Left lung (tissue), 14 donors: ENCODE measurements at regions of chr16 and their contacts with region 1.

Region 1: GRCh38 chr16:8660841-8661301 is 13.5 kb upstream of the ABAT start:
- DNase-seq: peak in 3 of 4 donors; percentile 26 to 77 (median 49)
- ATAC-seq: peak; percentile 98
- H3K4me3 ChIP-seq: no peak overlapping the region
- H3K27ac ChIP-seq: no peak overlapping the region
- H3K4me1 ChIP-seq: no peaks in the 10 kb centered on the region
- H3K27me3 ChIP-seq: no peaks in the 10 kb centered on the region
- CTCF ChIP-seq: peak; percentile 48 to 56

Region 2: GRCh38 chr16:8797364-8798173 is 136.7 kb after region 1 on chr16 and contains the starts of genes PMM2 and TMEM186:
- intact Hi-C with region 1: loop called in 1 of 2 experiments (anchors 10 kb)
- DNase-seq: peak; percentile 90 to 99 (median 98)
- ATAC-seq: peak; percentile 99
- H3K4me3 ChIP-seq: peak within 1 kb of the TSS; percentile 78 to 100
- H3K27ac ChIP-seq: peak within 1 kb of the TSS; percentile 71 to 81
- H3K4me1 ChIP-seq: peaks cover 19 to 44% of the 10 kb centered on the region in 2 donors
- H3K27me3 ChIP-seq: no peaks in the 10 kb centered on the region
- CTCF ChIP-seq: no peak
- polyA plus RNA-seq, gene PMM2: 19.2 to 27.9 (median 22.4) TPM
- polyA plus RNA-seq, gene TMEM186: 11.4 to 15.6 (median 12.9) TPM

Region 3: DNA sequence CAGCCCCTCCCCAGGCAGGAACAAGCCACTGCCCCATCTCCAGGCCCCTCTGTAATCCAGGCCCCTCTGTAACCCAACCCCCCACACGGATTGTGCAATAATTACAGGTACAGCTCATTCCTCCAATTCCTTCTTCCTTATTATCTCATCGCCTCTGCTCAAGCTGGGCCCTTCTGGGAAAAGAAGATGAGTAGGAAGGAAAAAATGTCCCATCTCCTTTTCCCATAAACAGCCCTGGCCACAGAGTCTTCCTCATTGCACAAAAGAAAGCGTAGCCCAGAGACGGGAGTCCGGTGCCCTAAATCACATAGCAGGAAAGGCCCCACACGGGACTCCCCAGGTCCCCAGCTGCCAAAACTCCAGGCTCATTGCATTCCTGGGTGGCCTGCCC is 217.6 kb after region 1 on chr16:
- intact Hi-C with region 1: loop called (anchors 10 kb)
- DNase-seq: peak in 1 of 4 donors; percentile 24
- ATAC-seq: peak; percentile 33
- H3K4me3 ChIP-seq: no peak overlapping the region
- H3K27ac ChIP-seq: no peak overlapping the region
- H3K4me1 ChIP-seq: peaks cover 0 to 8% of the 10 kb centered on the region in 2 donors
- H3K27me3 ChIP-seq: peaks cover 0 to 16% of the 10 kb centered on the region in 2 donors
- CTCF ChIP-seq: no peak